ENCODE measurements at regions of chr18 and their contacts with region 1.

Region 1: GRCh38 chr18:31399306-31400032 is 22.9 kb downstream of the DSG4 start:
- DNase-seq: peak; percentile 63
- H3K4me3 ChIP-seq: no peak overlapping the region
- H3K27ac ChIP-seq: peak overlapping the region; percentile 68
- H3K4me1 ChIP-seq: no peaks in the 10 kb centered on the region
- H3K27me3 ChIP-seq: no peaks in the 10 kb centered on the region
- CTCF ChIP-seq: no peak

Region 2: GRCh38 chr18:31206787-31207381 is 192.6 kb before region 1 on chr18:
- intact Hi-C with region 1: loop called (anchors 10 kb)
- DNase-seq: peak; percentile 94
- H3K4me3 ChIP-seq: no peak overlapping the region
- H3K27ac ChIP-seq: peak overlapping the region; percentile 84
- H3K4me1 ChIP-seq: peaks cover 4% of the 10 kb centered on the region
- H3K27me3 ChIP-seq: no peaks in the 10 kb centered on the region
- CTCF ChIP-seq: peak; percentile 32

Measured in colonic mucosa (tissue), 4 donors.